Right ventricle myocardium superior (tissue), 1 donor: ENCODE measurements at regions of chr6 and their contacts with region 1.

Region 1: DNA sequence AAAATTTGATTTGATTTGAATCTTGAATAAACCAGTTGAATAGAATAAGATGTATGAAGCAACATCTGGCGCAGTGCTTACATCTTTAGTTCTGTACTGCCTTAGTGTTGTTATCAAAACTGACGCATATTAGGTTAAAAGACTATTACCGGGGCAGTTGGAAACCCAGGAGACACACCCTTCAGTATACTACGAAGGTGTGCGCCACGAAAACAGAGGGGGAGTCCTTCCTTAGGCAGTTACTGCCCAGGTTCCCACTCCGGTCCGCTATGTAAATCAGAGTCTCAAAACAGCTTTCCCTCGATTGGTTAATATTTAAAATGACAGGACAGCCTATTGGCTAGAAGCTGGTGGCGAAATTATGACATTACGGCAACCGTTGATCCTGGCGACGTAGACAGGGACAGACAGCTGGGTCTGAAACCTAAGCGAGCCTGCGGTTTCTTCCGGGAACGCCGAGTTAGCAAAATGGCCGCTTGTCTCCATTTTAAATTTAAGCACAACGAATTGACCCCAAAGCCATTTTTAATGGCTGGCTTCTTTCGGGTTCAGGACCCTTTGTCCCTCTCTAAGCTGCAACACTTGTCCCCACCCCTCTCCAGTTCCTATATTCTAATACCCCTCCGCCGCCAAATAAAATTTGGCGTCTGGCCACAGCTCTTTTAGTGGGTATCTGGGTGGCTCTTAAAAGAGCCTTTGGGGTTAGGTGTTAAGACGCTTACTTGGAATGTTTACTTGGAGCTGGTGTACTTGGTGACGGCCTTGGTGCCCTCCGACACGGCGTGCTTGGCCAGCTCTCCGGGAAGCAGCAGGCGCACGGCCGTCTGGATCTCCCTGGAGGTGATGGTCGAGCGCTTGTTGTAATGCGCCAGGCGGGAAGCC is 35.8 kb downstream of the HFE start:
- DNase-seq: peak; percentile 92
- ATAC-seq: peak; percentile 91

Region 2: DNA sequence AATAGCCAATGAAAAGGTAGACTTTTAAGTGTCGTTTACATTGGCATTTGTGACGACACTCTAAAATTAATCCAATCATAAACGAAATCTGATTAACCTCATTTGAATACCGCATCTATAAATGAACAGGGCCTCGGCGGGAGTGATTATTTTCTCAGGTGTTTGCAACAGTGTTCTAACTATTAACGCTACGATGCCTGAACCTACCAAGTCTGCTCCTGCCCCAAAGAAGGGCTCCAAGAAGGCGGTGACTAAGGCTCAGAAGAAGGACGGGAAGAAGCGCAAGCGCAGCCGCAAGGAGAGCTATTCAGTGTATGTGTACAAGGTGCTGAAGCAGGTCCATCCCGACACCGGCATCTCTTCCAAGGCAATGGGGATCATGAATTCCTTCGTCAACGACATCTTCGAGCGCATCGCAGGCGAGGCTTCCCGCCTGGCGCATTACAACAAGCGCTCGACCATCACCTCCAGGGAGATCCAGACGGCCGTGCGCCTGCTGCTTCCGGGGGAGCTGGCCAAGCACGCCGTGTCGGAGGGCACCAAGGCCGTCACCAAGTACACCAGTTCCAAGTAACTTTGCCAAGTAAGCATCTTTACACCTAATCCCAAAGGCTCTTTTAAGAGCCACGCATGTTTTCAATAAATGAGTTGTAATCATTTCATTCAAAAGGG is 35.1 kb after region 1 on chr6:
- intact Hi-C with region 1: loop called (anchors 2 kb)
- DNase-seq: peak; percentile 78
- ATAC-seq: peak; percentile 20

Region 3: GRCh38 chr6:26196846-26197648 is 74.0 kb after region 1 on chr6:
- intact Hi-C with region 1: loop called (anchors 5 kb)
- DNase-seq: peak; percentile 72
- ATAC-seq: peak; percentile 57

Region 4: DNA sequence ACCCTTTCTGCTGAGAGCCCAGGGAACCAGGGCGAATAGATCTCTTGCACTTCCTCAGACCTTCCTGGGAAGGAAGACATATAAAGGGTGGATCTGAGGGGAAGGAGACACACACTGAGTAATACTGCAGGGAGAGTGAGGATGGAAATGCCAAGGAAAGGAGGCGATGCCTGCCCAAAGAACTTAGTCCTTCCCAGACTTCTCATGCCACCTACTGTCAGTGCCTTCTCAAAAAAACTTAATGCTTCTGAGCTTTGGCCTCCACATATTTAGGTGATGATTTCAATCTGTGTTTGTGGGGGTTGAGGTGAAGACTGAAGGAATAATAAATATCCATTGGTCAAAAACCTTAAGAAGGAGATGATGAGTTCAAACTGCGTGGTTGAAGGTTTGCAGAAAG is 288.7 kb after region 1 on chr6:
- intact Hi-C with region 1: no loop called
- DNase-seq: no peak
- ATAC-seq: no peak